AG04449 (cell line): ENCODE measurements at regions of chr16 and their contacts with region 1.

Region 1: GRCh38 chr16:18801197-18801972 is at the start of gene ARL6IP1:
- DNase-seq: peak; percentile 96
- H3K4me3 ChIP-seq: peak within 1 kb of the TSS; percentile 90
- CTCF ChIP-seq: peak; percentile 98

Region 2: DNA sequence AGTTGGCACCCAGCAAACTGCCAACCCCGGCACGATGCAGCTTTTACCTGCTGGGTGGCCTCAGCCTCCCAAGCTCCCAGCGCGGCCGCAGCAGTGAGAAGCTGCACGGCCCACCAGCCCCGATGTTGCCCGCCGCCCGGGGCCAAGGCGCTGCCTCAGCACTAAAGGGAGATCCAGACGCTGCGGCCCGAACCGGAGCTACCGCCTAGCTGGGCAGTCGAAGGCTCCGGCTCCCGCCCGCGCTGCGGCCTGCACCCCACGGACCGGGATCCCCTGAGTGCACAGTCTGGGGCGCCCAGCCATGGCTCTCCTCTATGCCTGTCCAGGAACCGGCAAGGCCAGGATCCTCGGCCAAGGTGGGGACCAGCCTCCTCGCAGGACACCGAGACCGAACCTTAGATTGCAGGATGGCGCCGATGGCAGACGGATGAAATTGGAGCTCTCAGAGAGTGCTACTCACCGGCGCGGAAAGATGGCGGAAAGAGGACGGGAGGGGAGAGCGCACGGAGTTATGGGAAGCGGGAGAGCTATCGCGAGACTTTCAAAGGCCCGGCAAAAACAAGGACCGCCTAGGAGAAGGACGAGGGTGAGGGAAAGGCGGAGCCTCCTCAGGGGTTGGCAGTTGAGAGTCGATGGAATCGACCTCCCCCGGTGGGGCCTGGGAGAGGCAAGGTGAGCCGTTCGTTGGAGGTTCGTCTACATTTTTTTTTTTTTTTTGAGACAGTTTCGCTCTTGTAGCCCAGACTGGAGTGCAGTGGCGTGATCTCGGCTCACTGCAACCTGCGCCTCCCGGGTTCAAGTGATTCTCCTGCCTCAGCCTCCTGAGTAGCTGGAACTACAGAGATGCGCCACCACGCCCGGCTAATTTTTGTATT is 11.3 kb before region 1 on chr16 and contains the start of gene RPS15A:
- CTCF ChIA-PET with region 1: interaction called, 90 read pairs
- POLR2A ChIA-PET with region 1: interaction called, 99 read pairs
- DNase-seq: peak; percentile 81
- H3K4me3 ChIP-seq: peak within 1 kb of the TSS; percentile 97
- CTCF ChIP-seq: no peak

Region 3: DNA sequence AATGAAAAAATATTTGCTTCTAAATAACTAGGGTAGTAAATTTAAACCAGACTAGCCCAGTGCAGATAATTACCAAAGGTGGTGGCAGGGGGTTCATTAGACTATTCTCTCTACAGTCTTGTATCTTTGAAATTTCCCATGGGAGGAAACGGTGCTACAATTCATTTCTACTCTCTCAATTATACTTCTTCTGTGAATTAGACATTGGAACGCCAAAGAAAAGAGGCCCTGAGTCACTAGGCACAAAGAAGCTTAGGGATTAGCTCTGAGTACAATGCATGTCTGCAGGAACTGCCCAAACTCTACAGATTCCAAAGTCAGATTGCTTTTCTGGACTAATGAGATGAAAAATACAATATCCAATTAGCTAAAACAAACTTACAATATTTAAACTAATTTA is 30.6 kb after region 1 on chr16:
- CTCF ChIA-PET with region 1: interaction called, 14 read pairs
- POLR2A ChIA-PET with region 1: interaction called, 4 read pairs
- DNase-seq: no peak
- H3K4me3 ChIP-seq: no peak overlapping the region
- CTCF ChIP-seq: no peak

Region 4: DNA sequence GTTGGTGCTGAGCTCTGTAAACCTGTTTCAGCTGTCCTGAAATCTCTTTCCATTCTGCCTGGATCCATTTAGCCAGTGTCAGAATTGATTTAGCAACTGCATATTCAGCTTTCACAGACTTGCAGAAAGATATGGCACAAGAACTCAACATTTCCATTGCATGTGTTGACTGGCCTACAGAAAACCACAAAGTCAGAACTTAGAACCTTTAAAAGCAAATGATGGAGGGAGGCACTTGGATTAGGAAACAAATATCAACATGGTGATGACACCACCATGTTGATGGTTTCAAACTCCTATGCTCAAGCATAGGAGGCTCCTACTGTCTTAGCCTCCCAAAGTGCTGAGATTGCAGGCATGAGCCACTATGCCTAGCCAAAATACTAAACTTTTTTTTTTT is 52.3 kb after region 1 on chr16:
- CTCF ChIA-PET with region 1: interaction called, 19 read pairs
- POLR2A ChIA-PET with region 1: no interaction called
- DNase-seq: no peak
- H3K4me3 ChIP-seq: no peak overlapping the region
- CTCF ChIP-seq: no peak